PC-3 (cell line): ENCODE measurements at regions of chr5 and their contacts with region 1.

Region 1: DNA sequence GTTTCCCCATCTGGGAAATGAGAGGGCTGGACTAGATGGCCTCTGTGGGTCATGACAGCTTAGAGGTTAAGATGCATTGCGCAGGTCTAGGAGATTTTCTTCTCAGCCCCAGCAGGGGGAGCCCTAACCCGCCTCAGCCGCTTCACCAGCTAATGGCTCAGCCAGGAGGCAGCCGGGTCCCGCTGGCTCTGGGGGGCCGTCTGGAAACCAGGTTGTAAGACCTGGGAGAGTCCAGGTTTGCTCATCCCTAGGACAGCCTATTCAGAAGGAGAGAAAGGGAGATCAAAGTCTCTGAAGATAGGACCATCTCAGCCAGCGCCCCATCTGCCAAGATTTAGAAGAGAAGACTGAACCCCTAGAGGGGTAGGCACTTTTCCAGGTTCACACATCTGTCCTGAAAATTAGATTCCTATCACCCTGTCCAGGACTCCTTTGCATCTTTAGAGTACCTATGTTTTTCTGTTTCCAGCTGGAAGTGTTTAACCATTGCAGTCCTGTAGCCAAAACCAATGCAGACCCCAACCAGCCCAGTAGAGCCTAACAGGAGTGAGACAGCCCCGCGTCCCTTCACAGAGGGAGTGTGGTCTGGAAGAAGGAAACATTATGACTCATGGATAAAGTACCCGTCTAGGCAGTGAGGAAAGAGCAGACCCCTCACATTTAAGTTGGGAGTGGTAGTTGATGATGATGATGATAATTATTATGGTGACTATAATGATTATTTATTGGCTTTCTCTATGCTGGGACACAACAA is 27.5 kb downstream of the SPARC start:
- DNase-seq: peak; percentile 79
- ATAC-seq: peak; percentile 82
- H3K4me3 ChIP-seq: no peak overlapping the region
- H3K27ac ChIP-seq: no peak overlapping the region
- H3K4me1 ChIP-seq: peaks cover 10% of the 10 kb centered on the region
- H3K27me3 ChIP-seq: no peaks in the 10 kb centered on the region
- CTCF ChIP-seq: peak; percentile 90

Region 2: GRCh38 chr5:151699071-151699901 is 40.1 kb after region 1 on chr5:
- CTCF ChIA-PET with region 1: interaction called, 3 read pairs
- POLR2A ChIA-PET with region 1: interaction called, 5 read pairs
- intact Hi-C with region 1: loop called (anchors 2 kb)
- DNase-seq: peak; percentile 85
- ATAC-seq: peak; percentile 98
- H3K4me3 ChIP-seq: 0 out of 2 replicates have a peak overlapping the region, but pooled peaks have one; percentile 29
- H3K27ac ChIP-seq: peak overlapping the region; percentile 72
- H3K4me1 ChIP-seq: peaks cover 12% of the 10 kb centered on the region
- H3K27me3 ChIP-seq: no peaks in the 10 kb centered on the region
- CTCF ChIP-seq: no peak